H1 (cell line): ENCODE measurements at regions of chr4 and their contacts with region 1.

Region 1: DNA sequence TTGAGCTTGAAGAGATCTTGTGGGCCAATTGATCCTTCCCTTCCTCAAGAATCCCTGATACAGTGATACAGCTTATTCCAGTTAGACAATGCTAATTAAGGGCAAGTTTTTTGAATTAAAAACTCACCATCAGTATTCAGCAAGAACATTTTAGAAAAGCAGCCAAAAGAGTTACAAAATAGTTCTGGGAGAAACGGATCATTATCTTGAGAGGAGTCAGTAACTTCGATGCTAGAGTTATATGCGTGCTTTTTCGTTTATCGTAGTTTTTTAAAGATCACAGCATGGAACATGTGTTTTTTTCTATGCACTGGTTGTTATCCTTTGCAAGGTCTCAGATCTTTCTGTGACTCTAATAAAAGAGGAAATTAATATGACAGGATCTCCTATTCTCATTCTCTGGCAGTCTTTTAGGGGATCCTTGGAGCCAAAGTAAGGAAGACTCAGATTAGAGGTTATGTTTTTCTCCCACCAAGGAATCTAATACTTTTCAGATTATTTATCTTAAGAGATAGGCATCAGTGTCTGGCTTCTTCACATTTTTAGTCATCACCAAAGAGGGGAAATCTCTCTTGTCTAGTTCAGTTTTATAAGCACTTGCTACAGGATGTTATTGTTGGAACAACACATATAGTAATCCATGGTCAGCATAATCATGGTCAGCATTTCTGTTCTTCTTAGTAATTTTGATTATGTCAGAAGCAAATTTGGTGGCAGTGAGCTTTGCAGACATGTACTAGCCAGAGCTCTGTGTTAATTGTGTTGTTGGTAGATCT is 109.7 kb downstream of the PDLIM5 start:
- DNase-seq: no peak
- H3K4me3 ChIP-seq: no peak overlapping the region
- H3K27ac ChIP-seq: no peak overlapping the region
- H3K4me1 ChIP-seq: no peaks in the 10 kb centered on the region
- H3K27me3 ChIP-seq: no peaks in the 10 kb centered on the region
- CTCF ChIP-seq: no peak
- EP300 ChIP-seq: no peak
- POLR2A ChIP-seq: no peak
- RAD21 ChIP-seq: no peak

Region 2: GRCh38 chr4:94406668-94407437 is 154.6 kb before region 1 on chr4:
- CTCF ChIA-PET with region 1: interaction called, 11 read pairs
- POLR2A ChIA-PET with region 1: no interaction called
- DNase-seq: peak; percentile 19 to 60
- H3K4me3 ChIP-seq: no peak overlapping the region
- H3K27ac ChIP-seq: no peak overlapping the region
- H3K4me1 ChIP-seq: peaks cover 0 to 7% (median 2%) of the 10 kb centered on the region in 4 experiments; a peak in 2 of 7 replicates
- H3K27me3 ChIP-seq: no peaks in the 10 kb centered on the region
- CTCF ChIP-seq: peak in 2 of 3 experiments; percentile 71 to 78; a peak in 3 of 4 replicates
- EP300 ChIP-seq: no peak
- POLR2A ChIP-seq: no peak
- RAD21 ChIP-seq: peak; percentile 86 to 89